Mucosa of descending colon (tissue), 3 donors: ENCODE measurements at regions of chr4 and their contacts with region 1.

Region 1: DNA sequence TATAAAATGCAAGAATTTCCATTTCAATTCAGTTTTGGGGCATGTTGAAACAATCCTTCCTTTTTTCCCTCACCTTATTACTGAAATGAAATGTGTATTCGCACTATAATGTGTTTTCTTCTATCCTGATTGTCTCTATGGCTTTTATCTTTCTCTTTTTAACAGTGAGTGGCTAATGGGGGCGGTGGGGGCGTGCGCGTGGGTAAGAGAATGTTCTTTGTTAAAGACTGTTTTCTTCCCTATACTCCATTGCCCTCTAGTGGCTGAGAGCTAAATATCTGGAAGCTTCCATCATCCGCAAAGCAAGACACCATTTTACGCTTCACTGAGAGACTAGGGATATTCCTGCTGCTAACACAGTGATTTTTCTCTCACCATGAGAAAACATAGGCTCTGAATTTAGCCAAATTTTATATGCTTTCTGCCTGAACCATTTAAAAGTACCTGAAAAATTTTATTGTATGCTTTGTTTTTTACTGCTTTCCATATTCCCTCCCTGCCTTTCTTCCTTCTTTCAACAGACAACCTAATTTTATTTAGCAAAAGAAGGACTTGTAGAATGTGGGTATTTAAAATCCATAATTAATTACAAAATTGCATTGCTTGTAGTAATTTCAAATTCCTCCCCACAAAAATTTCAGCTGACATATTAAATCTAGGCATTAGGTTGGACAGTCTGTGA is 194.0 kb downstream of the GASK1B start:
- DNase-seq: peak in 2 of 3 donors; percentile 31 to 57
- ATAC-seq: peak; percentile 72
- H3K4me3 ChIP-seq: no peak overlapping the region
- H3K4me1 ChIP-seq: no peaks in the 10 kb centered on the region
- CTCF ChIP-seq: peak; percentile 41

Region 2: GRCh38 chr4:157217708-157218107 is 761.1 kb before region 1 on chr4:
- intact Hi-C with region 1: loop called in 1 of 2 experiments (anchors 10 kb)
- DNase-seq: no peak
- ATAC-seq: no peak
- H3K4me3 ChIP-seq: no peak overlapping the region
- H3K4me1 ChIP-seq: no peaks in the 10 kb centered on the region
- CTCF ChIP-seq: no peak

Region 3: DNA sequence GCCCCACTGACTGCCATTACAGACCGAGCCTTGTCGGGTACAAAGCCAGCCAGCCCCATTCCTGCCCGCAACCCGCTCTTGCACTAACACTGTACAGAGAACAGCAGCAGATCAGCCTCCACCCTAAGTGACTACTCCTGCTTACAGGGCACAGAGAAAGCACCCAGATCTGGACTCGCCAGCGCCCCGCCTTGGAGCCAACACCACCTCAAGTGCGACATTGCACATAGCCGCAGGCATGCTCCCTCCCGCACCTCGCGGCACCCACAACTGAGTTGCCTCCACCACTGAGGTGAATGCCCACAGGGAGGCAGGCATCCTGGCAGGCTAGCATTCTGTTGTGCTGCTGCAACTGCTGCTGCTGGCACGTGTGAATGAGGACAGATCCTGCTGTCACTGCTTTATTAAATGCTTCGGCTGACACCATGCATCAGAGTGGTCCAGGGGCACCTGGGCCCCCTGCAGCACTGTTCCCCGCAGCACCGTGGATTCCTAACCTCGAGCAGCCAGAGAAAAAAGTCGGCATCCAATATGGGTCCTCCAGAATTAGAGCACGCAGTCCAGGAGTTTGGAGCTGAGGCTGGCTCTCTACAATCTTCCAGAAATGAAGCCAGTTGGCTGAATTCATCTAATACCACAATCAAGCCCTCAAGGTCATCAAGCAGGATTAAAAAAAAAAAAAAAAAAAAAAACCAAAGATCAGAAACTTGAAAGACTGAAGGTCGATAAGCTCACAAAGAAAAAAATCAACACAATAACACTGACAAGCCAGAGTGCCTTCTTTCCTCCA is 159.0 kb before region 1 on chr4:
- intact Hi-C with region 1: no loop called
- DNase-seq: peak in 1 of 3 donors; percentile 40
- ATAC-seq: no peak
- H3K4me3 ChIP-seq: no peak overlapping the region
- H3K4me1 ChIP-seq: no peaks in the 10 kb centered on the region
- CTCF ChIP-seq: no peak

Region 4: DNA sequence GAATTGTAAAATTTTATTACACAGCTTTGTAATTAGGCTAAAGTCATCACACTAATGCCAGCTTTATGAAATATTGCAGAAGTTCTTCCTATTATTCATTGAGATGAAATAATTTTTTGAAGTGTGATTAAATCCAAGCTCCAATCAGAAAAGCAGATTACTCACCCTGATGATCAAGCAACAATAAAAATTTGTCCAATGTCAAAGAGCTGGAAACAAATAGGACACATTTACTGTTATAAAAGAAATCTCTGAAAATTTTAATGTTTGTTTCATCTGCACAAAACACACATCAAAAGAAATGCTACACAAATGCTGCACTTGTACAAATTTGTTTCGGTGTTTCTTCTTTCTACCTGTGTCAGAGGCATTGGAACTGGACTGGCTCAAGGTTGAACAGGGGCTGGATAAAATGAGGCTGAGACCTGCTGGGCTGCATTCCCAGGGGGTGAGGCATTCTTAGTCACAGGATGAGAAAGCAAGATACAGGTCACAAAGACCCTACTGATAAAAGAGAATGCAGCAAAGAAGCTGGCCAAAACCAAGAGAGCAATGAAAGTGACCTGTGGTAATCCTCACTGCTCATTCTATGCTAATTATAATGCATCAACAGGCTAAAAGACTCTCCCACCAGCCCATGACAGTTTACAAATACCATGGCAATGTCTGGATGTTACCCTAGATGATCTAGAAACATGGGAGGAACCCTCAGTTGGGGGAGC is 115.8 kb after region 1 on chr4:
- intact Hi-C with region 1: no loop called
- DNase-seq: no peak
- ATAC-seq: no peak
- H3K4me3 ChIP-seq: no peak overlapping the region
- H3K4me1 ChIP-seq: no peaks in the 10 kb centered on the region
- CTCF ChIP-seq: no peak

Region 5: DNA sequence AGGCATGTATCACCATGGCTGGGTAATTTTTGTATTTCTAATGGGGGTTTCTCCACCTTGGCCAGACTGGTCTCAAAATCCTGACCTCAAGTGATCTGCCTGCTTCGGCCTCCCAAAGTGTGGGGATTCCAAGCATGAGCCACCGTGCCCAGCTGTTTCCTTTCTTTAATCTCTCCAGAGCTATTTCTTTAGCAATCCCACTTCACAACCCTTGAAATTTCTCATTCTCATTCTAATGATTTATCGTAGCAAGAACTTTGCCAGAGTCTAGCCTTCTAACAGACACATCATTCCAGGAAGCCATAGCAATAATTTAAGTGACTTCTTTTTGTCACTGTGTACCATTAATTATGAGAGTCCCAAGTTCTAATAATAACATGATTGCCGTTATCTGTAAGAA is 611.5 kb after region 1 on chr4:
- intact Hi-C with region 1: no loop called
- DNase-seq: no peak
- ATAC-seq: no peak
- H3K4me3 ChIP-seq: no peak overlapping the region
- H3K4me1 ChIP-seq: no peaks in the 10 kb centered on the region
- CTCF ChIP-seq: no peak